Activated naive CD4-positive, alpha-beta T cell treated with anti-CD3 and anti-CD28 coated beads, Interleukin-2, amount 10 ng/mL, durations not matched to agents 7 days and 5 days (primary cell): ENCODE measurements at regions of chr12 and their contacts with region 1.

Region 1: GRCh38 chr12:56636675-56637540 is 6.8 kb upstream of the BAZ2A start:
- DNase-seq: peak; percentile 96
- H3K4me3 Mint-ChIP-seq: peak overlapping the region; percentile 99
- H3K27ac Mint-ChIP-seq: peak overlapping the region; percentile 97
- H3K4me1 Mint-ChIP-seq: peaks cover 66% of the 10 kb centered on the region
- H3K27me3 Mint-ChIP-seq: no peaks in the 10 kb centered on the region

Region 2: DNA sequence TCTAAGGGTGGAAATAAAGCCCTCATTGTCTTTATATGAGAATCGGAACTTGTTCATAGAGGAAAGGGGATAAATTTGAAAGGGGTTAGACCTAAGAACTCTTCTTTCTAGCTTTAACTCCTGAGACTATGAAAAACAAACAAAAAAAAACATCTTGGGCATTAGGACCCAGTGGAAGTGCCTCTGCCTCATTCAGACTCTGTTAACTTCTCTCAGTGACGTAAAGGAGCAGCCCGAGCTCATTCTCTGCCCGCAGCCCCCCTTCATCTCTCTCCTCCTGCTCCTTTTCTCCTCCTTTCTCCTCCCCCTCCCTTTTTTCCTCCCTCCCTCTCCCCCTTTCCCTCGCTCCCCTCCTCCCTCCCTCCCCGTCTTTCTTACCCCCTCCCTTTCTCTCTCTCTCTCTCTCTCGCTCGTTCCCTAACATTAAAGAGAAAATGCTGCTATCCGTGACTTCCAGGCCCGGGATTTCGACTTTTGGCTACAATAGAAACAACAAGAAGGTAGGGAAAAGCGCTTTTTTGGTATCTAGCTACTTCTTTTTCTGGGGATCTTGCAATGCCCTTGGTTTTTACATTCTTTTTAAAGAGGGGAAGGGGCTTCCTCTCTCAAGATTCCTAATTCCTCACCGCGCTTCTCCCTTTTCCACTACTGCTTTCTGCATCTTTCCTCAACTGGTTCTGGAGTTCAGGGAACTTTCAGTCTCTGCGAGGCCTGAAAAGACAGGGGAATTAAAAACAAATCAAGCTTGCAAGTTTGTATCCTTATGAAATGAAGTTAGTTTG is 115.1 kb before region 1 on chr12 and contains the start of gene RBMS2:
- CTCF ChIA-PET with region 1: interaction called, 18 read pairs
- DNase-seq: peak; percentile 53
- H3K4me3 Mint-ChIP-seq: peak within 1 kb of the TSS; percentile 76
- H3K27ac Mint-ChIP-seq: no peak within 1 kb of the TSS
- H3K4me1 Mint-ChIP-seq: peaks cover 33% of the 10 kb centered on the region
- H3K27me3 Mint-ChIP-seq: peaks cover 12% of the 10 kb centered on the region

Region 3: DNA sequence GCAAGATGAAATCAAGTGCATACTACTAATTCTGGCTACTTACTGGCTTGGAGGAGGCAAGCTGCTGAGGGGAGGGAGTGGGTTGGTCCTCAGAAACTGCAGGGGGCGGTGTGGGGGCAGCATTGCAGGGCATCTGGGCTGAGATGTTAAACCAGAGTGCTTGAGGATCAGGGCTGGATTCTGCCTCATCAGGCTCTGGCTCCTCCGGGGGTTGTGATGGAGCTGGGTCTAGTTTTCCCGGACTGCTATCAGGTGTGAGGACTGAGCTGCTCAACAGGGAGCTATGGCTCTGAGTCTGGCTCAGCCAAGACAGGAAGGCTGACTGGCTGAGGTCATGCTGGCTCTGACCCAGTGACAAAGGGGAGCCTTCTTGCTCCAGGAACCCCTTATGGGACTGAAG is 35.4 kb before region 1 on chr12:
- CTCF ChIA-PET with region 1: interaction called, 31 read pairs
- DNase-seq: peak; percentile 61
- H3K4me3 Mint-ChIP-seq: no peak overlapping the region
- H3K27ac Mint-ChIP-seq: no peak overlapping the region
- H3K4me1 Mint-ChIP-seq: no peaks in the 10 kb centered on the region
- H3K27me3 Mint-ChIP-seq: no peaks in the 10 kb centered on the region

Region 4: GRCh38 chr12:56622535-56622934 is 14.4 kb before region 1 on chr12:
- CTCF ChIA-PET with region 1: interaction called, 27 read pairs
- DNase-seq: no peak
- H3K4me3 Mint-ChIP-seq: no peak overlapping the region
- H3K27ac Mint-ChIP-seq: no peak overlapping the region
- H3K4me1 Mint-ChIP-seq: peaks cover 37% of the 10 kb centered on the region
- H3K27me3 Mint-ChIP-seq: no peaks in the 10 kb centered on the region

Region 5: GRCh38 chr12:56688129-56688845 is 51.4 kb after region 1 on chr12 and contains the start of gene PTGES3:
- CTCF ChIA-PET with region 1: interaction called, 12 read pairs
- DNase-seq: peak; percentile 98
- H3K4me3 Mint-ChIP-seq: peak within 1 kb of the TSS; percentile 100
- H3K27ac Mint-ChIP-seq: peak within 1 kb of the TSS; percentile 100
- H3K4me1 Mint-ChIP-seq: peaks cover 35% of the 10 kb centered on the region
- H3K27me3 Mint-ChIP-seq: no peaks in the 10 kb centered on the region